HepG2 (cell line): ENCODE measurements at regions of chr1 and their contacts with region 1.

Region 1: GRCh38 chr1:109636201-109636952 is 16.7 kb downstream of the AMPD2 start:
- DNase-seq: peak; percentile 46
- ATAC-seq: peak; percentile 35
- H3K4me3 ChIP-seq: peak overlapping the region in 2 of 3 experiments; percentile 24 to 52; a peak in 3 of 6 replicates
- H3K27ac ChIP-seq: peak overlapping the region; percentile 39
- H3K4me1 ChIP-seq: peaks cover 27% of the 10 kb centered on the region
- H3K27me3 ChIP-seq: no peaks in the 10 kb centered on the region
- CTCF ChIP-seq: peak; percentile 41
- EP300 ChIP-seq: no peak; a peak in 1 of 4 replicates
- POLR2A ChIP-seq: no peak
- RAD21 ChIP-seq: no peak

Region 2: GRCh38 chr1:109620841-109621286 is 15.5 kb before region 1 on chr1:
- CTCF ChIA-PET with region 1: no interaction called
- POLR2A ChIA-PET with region 1: interaction called, 11 read pairs
- in situ Hi-C with region 1: no loop called
- intact Hi-C with region 1: no loop called
- DNase-seq: peak; percentile 88
- ATAC-seq: peak; percentile 74
- H3K4me3 ChIP-seq: peak overlapping the region; percentile 71 to 89 (median 80)
- H3K27ac ChIP-seq: peak overlapping the region; percentile 92
- H3K4me1 ChIP-seq: peaks cover 59% of the 10 kb centered on the region
- H3K27me3 ChIP-seq: no peaks in the 10 kb centered on the region; a peak in 1 of 5 replicates
- CTCF ChIP-seq: no peak
- EP300 ChIP-seq: no peak
- POLR2A ChIP-seq: 0 out of 4 replicates have a peak, but pooled peaks of 1 of the 2 experiments have one; percentile 15
- RAD21 ChIP-seq: no peak